Gastrocnemius medialis (tissue), 4 donors: ENCODE measurements at regions of chr18 and their contacts with region 1.

Region 1: GRCh38 chr18:33839441-33840211 is 261.6 kb downstream of the ASXL3 start:
- DNase-seq: no peak
- ATAC-seq: no peak
- H3K4me3 ChIP-seq: no peak overlapping the region
- H3K27ac ChIP-seq: no peak overlapping the region
- H3K4me1 ChIP-seq: no peaks in the 10 kb centered on the region
- H3K27me3 ChIP-seq: no peaks in the 10 kb centered on the region
- CTCF ChIP-seq: peak in 2 of 5 experiments; percentile 29 to 47
- POLR2A ChIP-seq: no peak

Region 2: DNA sequence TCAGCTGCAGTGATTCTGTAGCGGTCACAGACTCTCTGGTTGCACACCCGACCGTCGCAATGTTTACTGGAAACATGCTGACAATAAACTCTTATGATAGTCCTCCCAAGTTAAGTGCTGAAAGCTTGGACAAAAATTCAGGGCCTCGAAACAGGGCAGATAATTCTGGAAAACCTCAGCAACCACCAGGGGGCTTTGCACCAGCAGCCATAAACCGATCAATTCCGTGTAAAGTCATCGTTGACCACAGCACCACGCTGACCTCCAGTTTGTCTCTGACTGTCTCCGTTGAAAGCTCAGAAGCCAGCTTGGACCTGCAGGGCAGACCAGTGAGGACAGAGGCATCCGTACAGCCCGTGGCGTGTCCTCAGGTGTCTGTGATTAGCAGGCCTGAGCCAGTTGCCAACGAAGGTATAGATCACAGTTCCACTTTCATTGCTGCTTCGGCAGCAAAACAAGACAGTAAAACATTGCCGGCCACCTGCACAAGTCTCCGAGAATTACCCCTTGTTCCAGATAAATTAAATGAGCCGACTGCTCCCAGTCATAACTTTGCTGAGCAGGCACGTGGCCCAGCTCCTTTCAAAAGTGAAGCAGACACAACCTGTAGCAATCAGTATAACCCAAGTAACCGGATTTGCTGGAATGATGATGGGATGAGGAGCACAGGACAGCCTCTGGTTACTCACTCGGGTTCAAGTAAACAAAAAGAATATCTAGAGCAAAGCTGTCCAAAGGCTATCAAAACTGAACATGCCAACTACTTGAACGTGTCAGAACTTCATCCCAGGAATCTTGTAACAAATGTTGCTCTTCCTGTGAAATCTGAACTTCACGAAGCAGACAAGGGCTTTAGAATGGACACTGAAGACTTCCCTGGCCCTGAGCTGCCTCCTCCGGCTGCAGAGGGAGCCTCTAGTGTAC is 95.3 kb before region 1 on chr18:
- in situ Hi-C with region 1: loop called in 1 of 4 experiments (anchors 25 kb)
- intact Hi-C with region 1: no loop called
- DNase-seq: no peak
- ATAC-seq: no peak
- H3K4me3 ChIP-seq: no peak overlapping the region
- H3K27ac ChIP-seq: no peak overlapping the region
- H3K4me1 ChIP-seq: no peaks in the 10 kb centered on the region
- H3K27me3 ChIP-seq: no peaks in the 10 kb centered on the region
- CTCF ChIP-seq: no peak
- POLR2A ChIP-seq: no peak

Region 3: GRCh38 chr18:34023471-34023870 is 183.8 kb after region 1 on chr18:
- in situ Hi-C with region 1: no loop called
- intact Hi-C with region 1: no loop called
- DNase-seq: no peak
- ATAC-seq: no peak
- H3K4me3 ChIP-seq: no peak overlapping the region
- H3K27ac ChIP-seq: no peak overlapping the region
- H3K4me1 ChIP-seq: no peaks in the 10 kb centered on the region
- H3K27me3 ChIP-seq: no peaks in the 10 kb centered on the region
- CTCF ChIP-seq: no peak
- POLR2A ChIP-seq: no peak

Region 4: GRCh38 chr18:34212511-34212910 is 372.9 kb after region 1 on chr18:
- in situ Hi-C with region 1: no loop called
- intact Hi-C with region 1: no loop called
- DNase-seq: no peak
- ATAC-seq: no peak
- H3K4me3 ChIP-seq: no peak overlapping the region
- H3K27ac ChIP-seq: no peak overlapping the region
- H3K4me1 ChIP-seq: no peaks in the 10 kb centered on the region
- H3K27me3 ChIP-seq: no peaks in the 10 kb centered on the region
- CTCF ChIP-seq: no peak
- POLR2A ChIP-seq: no peak